Dorsolateral prefrontal cortex (tissue), 120 donors: ENCODE measurements at regions of chr21 and their contacts with region 1.

Region 1: GRCh38 chr21:43984905-43985689 is 27.0 kb upstream of the TRAPPC10 start:
- DNase-seq: no peak
- H3K4me3 ChIP-seq: no peak overlapping the region
- H3K27ac ChIP-seq: peak overlapping the region in 54 of 59 donors; percentile 5 to 98 (median 94)
- H3K27me3 ChIP-seq: no peaks in the 10 kb centered on the region
- CTCF ChIP-seq: no peak

Region 2: GRCh38 chr21:44051462-44051941 is 66.4 kb after region 1 on chr21:
- intact Hi-C with region 1: loop called in 1 of 2 experiments (anchors 5 kb)
- DNase-seq: peak in 5 of 10 donors; percentile 41 to 67 (median 56)
- H3K4me3 ChIP-seq: peak overlapping the region in 7 of 59 donors; percentile 2 to 20 (median 7)
- H3K27ac ChIP-seq: peak overlapping the region; percentile 77 to 99 (median 95)
- H3K27me3 ChIP-seq: no peaks in the 10 kb centered on the region
- CTCF ChIP-seq: peak in 1 of 56 donors; percentile 10

Region 3: GRCh38 chr21:44065428-44065827 is 80.3 kb after region 1 on chr21:
- intact Hi-C with region 1: loop called in 1 of 2 experiments (anchors 5 kb)
- DNase-seq: peak in 1 of 10 donors; percentile 38
- H3K4me3 ChIP-seq: no peak overlapping the region
- H3K27ac ChIP-seq: peak overlapping the region in 40 of 59 donors; percentile 0 to 83 (median 48)
- H3K27me3 ChIP-seq: no peaks in the 10 kb centered on the region
- CTCF ChIP-seq: no peak

Region 4: DNA sequence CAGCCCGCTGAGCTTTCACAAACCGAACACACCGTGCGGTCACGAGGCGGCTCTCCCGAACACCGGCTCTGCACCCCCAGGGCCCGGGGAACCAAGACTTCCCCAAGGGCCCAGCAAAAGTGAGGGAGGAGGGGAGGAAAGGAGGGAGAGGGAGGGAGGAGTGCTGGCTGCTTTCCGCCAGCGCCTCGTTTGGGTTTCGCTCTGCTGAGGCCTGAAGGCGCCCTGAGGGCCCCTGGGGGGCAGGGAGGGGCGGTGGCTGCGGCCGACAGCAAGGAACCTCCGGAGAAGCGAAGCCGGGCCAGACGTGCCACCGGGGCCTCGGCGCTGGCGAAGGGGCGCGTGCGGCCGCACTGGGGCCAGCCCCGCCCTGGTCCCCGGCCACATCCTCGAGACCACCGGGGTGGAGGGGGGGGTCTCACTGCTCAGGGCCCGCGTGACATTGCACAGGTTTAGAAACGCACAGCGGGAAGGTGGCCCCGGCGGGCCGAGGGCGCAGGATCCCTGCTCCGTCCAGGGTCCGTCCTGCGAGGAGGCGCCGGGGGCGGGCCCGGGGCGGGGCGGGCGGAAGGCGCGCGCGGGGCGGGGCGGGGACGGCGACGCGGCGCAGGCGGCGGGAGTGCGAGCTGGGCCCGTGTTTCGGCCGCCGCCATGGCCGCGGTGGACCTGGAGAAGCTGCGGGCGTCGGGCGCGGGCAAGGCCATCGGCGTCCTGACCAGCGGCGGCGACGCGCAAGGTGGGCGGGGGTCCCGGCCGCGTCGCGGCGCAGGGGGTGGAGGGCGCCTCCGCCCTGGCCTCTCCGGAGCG is 314.6 kb after region 1 on chr21 and contains the start of gene PFKL:
- intact Hi-C with region 1: loop called in 1 of 2 experiments (anchors 10 kb)
- DNase-seq: peak in 6 of 10 donors; percentile 49 to 77 (median 64)
- H3K4me3 ChIP-seq: peak within 1 kb of the TSS; percentile 57 to 88 (median 78)
- H3K27ac ChIP-seq: peak within 1 kb of the TSS in 58 of 59 donors; percentile 58 to 98 (median 92)
- H3K27me3 ChIP-seq: no peaks in the 10 kb centered on the region
- CTCF ChIP-seq: peak in 7 of 56 donors; percentile 6 to 21 (median 17)
- total RNA-seq, gene PFKL: 102 to 205 (median 156) TPM